Esophagus muscularis mucosa (tissue), 4 donors: ENCODE measurements at regions of chr2 and their contacts with region 1.

Region 1: DNA sequence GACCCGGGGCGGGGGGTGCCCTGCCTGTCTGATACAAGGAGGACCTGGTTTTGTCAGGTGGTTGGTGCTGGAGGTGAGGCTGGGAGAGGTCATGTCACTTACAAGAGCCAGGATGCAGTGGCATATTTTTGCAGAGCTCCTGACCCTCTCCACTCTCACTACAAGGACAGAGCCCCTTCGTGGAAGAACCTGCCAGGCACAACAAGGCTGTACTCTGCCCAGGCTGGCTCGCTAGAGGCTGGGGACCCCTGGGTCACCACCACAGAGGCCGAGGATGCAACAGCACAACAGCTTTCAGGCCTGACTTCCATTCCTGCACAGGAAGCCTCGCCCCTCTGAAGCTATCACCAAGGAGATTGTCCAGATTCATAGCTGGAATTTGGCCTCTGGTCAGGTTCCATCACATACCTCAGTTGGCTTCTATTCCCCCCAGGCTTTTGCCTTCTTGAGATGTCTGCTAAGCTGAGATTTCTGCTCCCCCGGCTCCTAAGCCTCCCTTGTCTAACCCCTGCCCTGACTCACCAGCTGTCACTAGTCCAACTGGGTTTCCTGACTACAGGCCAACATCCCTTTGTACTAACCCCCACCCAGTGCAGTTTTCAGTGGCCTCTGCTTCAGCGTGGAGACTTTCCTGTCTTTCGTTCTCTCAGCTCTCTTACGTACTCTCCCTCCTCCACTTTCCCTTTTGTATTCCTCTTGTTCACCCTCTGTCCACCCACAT is 132.5 kb upstream of the EPAS1 start:
- DNase-seq: peak; percentile 94
- H3K4me3 ChIP-seq: peak overlapping the region in 1 of 4 donors; percentile 18
- H3K27ac ChIP-seq: peak overlapping the region; percentile 21 to 62 (median 52)
- H3K4me1 ChIP-seq: peaks cover 38 to 51% (median 43%) of the 10 kb centered on the region in 4 donors
- H3K27me3 ChIP-seq: no peaks in the 10 kb centered on the region
- CTCF ChIP-seq: no peak
- EP300 ChIP-seq: no peak
- POLR2A ChIP-seq: no peak

Region 2: GRCh38 chr2:45946023-45946422 is 218.7 kb before region 1 on chr2:
- intact Hi-C with region 1: no loop called
- DNase-seq: no peak
- H3K4me3 ChIP-seq: no peak overlapping the region
- H3K27ac ChIP-seq: no peak overlapping the region
- H3K4me1 ChIP-seq: peaks cover 7 to 40% (median 32%) of the 10 kb centered on the region in 4 donors
- H3K27me3 ChIP-seq: no peaks in the 10 kb centered on the region
- CTCF ChIP-seq: no peak
- EP300 ChIP-seq: no peak
- POLR2A ChIP-seq: no peak

Region 3: GRCh38 chr2:46097714-46098480 is 66.8 kb before region 1 on chr2:
- intact Hi-C with region 1: loop called (anchors 5 kb)
- DNase-seq: no peak
- H3K4me3 ChIP-seq: no peak overlapping the region
- H3K27ac ChIP-seq: peak overlapping the region; percentile 76 to 79 (median 77)
- H3K4me1 ChIP-seq: peaks cover 6 to 27% (median 22%) of the 10 kb centered on the region in 4 donors
- H3K27me3 ChIP-seq: no peaks in the 10 kb centered on the region
- CTCF ChIP-seq: no peak
- EP300 ChIP-seq: no peak
- POLR2A ChIP-seq: no peak